Activated CD4-positive, alpha-beta T cell treated with anti-CD3 and anti-CD28 coated beads for 36 hours (primary cell): ENCODE measurements at regions of chr21 and their contacts with region 1.

Region 1: DNA sequence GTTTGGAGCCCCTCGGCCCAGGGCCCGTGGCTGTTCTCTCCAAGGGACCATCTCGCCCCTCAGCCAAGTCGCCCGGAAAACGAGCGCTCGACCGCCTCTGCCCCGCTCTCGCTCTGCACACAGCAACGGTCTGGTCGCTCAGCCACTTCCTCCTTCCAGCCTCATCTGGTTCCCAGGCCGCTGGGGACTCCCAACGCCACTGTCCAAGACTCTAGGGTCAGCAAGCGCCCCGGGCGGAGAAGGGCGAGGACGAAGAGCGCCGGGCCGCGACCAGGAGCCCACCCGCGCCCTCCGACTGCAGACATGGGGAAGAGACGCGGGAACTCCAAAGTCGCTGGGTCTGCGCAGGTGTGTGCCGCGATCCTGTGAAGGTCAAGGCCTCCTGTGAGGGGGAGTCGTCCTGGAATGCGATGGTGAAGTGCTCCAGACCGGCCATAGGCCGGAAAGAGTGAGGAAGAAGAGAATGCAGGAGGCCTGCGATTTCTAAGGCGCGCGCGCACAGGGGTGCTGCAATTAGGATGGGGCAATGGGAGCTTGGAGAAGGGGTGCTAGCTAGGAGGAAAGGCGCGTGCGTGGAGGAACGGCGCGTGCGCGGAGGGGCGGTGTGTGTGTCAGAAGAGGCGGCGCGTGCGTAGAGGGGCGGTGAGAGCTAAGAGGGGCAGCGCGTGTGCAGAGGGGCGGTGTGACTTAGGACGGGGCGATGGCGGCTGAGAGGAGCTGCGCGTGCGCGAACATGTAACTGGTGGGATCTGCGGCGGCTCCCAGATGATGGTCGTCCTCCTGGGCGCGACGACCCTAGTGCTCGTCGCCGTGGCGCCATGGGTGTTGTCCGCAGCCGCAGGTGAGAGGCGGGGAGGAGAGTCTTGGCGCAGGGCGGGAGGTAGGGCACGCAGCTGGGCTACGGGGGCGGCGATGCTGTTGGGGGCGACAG is at the start of gene IFNAR1:
- DNase-seq: peak; percentile 100
- ATAC-seq: peak; percentile 95
- H3K4me3 Mint-ChIP-seq: no peak within 1 kb of the TSS
- H3K27ac Mint-ChIP-seq: no peak within 1 kb of the TSS
- H3K4me1 Mint-ChIP-seq: peaks cover 31% of the 10 kb centered on the region
- H3K27me3 Mint-ChIP-seq: no peaks in the 10 kb centered on the region
- total RNA-seq, gene IFNAR1: 21.8 to 29.6 TPM

Region 2: GRCh38 chr21:32770871-32771523 is 553.6 kb before region 1 on chr21:
- CTCF ChIA-PET with region 1: no interaction called
- POLR2A ChIA-PET with region 1: interaction called, 3 read pairs
- intact Hi-C with region 1: loop called in 1 of 2 experiments (anchors 10 kb)
- DNase-seq: peak; percentile 76
- ATAC-seq: peak; percentile 17
- H3K4me3 Mint-ChIP-seq: peak overlapping the region; percentile 99
- H3K27ac Mint-ChIP-seq: peak overlapping the region; percentile 96
- H3K4me1 Mint-ChIP-seq: peaks cover 54% of the 10 kb centered on the region
- H3K27me3 Mint-ChIP-seq: no peaks in the 10 kb centered on the region

Region 3: GRCh38 chr21:33229784-33230544 is 94.6 kb before region 1 on chr21 and contains the start of gene IFNAR2:
- CTCF ChIA-PET with region 1: no interaction called
- POLR2A ChIA-PET with region 1: interaction called, 4 read pairs
- intact Hi-C with region 1: loop called (anchors 1 to 2 kb)
- DNase-seq: peak; percentile 85
- ATAC-seq: peak; percentile 55
- H3K4me3 Mint-ChIP-seq: peak within 1 kb of the TSS; percentile 84
- H3K27ac Mint-ChIP-seq: peak within 1 kb of the TSS; percentile 91
- H3K4me1 Mint-ChIP-seq: peaks cover 54% of the 10 kb centered on the region
- H3K27me3 Mint-ChIP-seq: no peaks in the 10 kb centered on the region
- total RNA-seq, gene IFNAR2: 26.6 to 29.8 TPM

Region 4: GRCh38 chr21:33380483-33380998 is 56.0 kb after region 1 on chr21:
- CTCF ChIA-PET with region 1: interaction called, 5 read pairs
- POLR2A ChIA-PET with region 1: interaction called, 4 read pairs
- intact Hi-C with region 1: loop called (anchors 1 to 2 kb)
- DNase-seq: peak; percentile 96
- ATAC-seq: peak; percentile 85
- H3K4me3 Mint-ChIP-seq: peak overlapping the region; percentile 19
- H3K27ac Mint-ChIP-seq: peak overlapping the region; percentile 88
- H3K4me1 Mint-ChIP-seq: peaks cover 62% of the 10 kb centered on the region
- H3K27me3 Mint-ChIP-seq: peaks cover 4% of the 10 kb centered on the region

Region 5: GRCh38 chr21:33428669-33429068 is 104.1 kb after region 1 on chr21:
- CTCF ChIA-PET with region 1: no interaction called
- POLR2A ChIA-PET with region 1: no interaction called
- intact Hi-C with region 1: no loop called
- DNase-seq: no peak
- ATAC-seq: no peak
- H3K4me3 Mint-ChIP-seq: no peak overlapping the region
- H3K27ac Mint-ChIP-seq: no peak overlapping the region
- H3K4me1 Mint-ChIP-seq: peaks cover 11% of the 10 kb centered on the region
- H3K27me3 Mint-ChIP-seq: no peaks in the 10 kb centered on the region

Region 6: DNA sequence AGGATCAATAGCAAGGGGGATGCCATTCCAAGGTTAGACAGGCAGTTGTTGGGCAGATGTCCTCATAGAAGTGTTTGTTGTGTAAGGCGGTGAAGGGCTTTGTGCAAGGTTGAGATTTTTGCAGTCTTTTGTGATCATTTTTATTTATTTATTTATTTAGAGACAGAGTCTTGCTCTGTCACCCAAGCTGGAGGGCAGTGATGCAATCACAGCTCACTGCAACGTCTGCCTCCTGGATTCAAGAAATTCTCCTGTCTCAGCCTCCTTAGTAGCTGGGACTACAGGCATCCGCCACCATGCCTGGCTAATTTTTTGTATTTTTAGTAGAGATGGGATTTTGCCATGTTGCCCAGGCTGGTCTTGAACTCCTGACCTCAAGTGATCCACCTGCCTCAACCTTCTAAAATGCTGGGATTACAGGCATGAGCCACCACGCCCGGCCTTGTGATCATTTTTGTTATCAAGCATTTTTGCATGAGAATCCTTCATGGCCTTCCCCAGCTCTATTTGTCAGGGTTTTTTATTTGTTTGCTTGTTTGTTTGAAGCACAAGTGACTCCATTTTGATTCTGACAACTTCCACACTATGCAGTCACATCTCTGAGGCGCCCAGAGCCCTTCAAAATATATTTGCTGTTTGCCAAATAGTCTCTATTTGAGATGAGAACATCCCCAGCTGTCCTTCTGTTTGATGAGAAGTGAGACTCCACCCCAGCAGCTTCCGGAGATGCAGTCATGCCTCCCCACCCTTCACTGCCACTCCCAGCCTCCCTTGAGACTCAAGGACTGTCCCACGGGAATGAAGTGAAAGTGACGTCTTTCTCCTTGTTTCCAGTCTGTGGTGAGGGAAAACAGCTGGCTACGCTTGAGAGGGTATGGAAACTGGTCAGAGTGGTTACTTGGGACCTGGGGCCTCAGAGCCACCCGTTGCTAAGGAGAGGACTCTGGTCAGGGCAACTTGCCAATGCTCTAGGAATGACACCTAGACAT is 117.2 kb after region 1 on chr21:
- CTCF ChIA-PET with region 1: interaction called, 17 read pairs
- POLR2A ChIA-PET with region 1: no interaction called
- intact Hi-C with region 1: loop called in 1 of 2 experiments (anchors 1 kb)
- DNase-seq: no peak
- ATAC-seq: no peak
- H3K4me3 Mint-ChIP-seq: no peak overlapping the region
- H3K27ac Mint-ChIP-seq: peak overlapping the region; percentile 12
- H3K4me1 Mint-ChIP-seq: peaks cover 5% of the 10 kb centered on the region
- H3K27me3 Mint-ChIP-seq: no peaks in the 10 kb centered on the region

Region 7: DNA sequence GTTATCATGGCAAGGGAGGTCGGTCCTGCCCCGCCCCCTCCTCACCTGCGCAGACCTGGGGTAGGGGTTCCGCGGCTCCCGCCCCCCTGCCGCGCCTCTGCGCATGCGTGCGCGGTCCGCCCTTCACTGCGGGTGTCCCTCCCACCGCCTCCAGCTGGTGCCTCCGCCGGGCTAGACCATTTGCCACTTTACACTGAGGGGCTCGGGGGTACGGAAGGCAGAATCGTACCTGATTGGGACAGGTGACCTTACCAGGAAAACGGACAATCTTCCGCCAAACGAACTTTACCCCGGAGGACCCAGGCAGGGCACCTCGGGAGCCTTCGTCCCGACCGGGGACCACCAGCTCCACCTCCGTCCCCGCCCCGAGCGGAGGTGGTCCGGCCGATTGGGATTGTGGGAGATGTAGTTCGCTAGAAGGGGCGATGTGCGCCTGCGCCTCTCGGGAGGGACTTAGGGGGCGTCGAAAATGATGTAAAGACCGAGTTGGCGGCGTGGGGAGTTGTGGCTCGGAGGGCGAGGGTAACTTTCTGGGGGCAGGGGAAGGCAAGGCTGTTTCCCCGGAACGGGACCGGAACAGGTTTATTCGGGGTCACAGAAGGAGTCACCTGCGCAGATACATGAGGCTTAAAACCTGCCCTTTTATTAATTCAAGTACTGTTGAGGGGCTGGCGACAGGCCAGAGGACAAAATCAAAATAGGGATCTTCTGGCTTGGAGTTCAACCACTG is 167.0 kb after region 1 on chr21 and contains the start of gene DNAJC28:
- CTCF ChIA-PET with region 1: no interaction called
- POLR2A ChIA-PET with region 1: interaction called, 3 read pairs
- intact Hi-C with region 1: loop called in 1 of 2 experiments (anchors 1 kb)
- DNase-seq: peak; percentile 95
- ATAC-seq: peak; percentile 99
- H3K4me3 Mint-ChIP-seq: peak within 1 kb of the TSS; percentile 87
- H3K27ac Mint-ChIP-seq: peak within 1 kb of the TSS; percentile 91
- H3K4me1 Mint-ChIP-seq: peaks cover 9% of the 10 kb centered on the region
- H3K27me3 Mint-ChIP-seq: no peaks in the 10 kb centered on the region
- total RNA-seq, gene DNAJC28: 0.37 to 0.43 TPM